ENCODE measurements at regions of chr20 and their contacts with region 1.

Region 1: GRCh38 chr20:8131598-8132483 is at the start of gene PLCB1:
- DNase-seq: peak; percentile 10
- H3K4me3 ChIP-seq: peak within 1 kb of the TSS; percentile 53 to 85 (median 68)
- H3K27ac ChIP-seq: peak within 1 kb of the TSS; percentile 74 to 92 (median 82)
- H3K4me1 ChIP-seq: peaks cover 0 to 38% (median 4%) of the 10 kb centered on the region in 3 donors
- H3K27me3 ChIP-seq: peaks cover 0 to 50% (median 0%) of the 10 kb centered on the region in 4 donors
- CTCF ChIP-seq: peak; percentile 66 to 82 (median 76)
- POLR2A ChIP-seq: no peak
- total RNA-seq, gene PLCB1: 1.9 to 20.4 (median 5.0) TPM

Region 2: GRCh38 chr20:8389381-8390036 is 257.7 kb after region 1 on chr20:
- intact Hi-C with region 1: loop called (anchors 10 kb)
- DNase-seq: no peak
- H3K4me3 ChIP-seq: no peak overlapping the region
- H3K27ac ChIP-seq: no peak overlapping the region
- H3K4me1 ChIP-seq: peaks cover 0 to 21% (median 7%) of the 10 kb centered on the region in 3 donors
- H3K27me3 ChIP-seq: no peaks in the 10 kb centered on the region
- CTCF ChIP-seq: peak; percentile 39 to 57 (median 51)
- POLR2A ChIP-seq: no peak

Region 3: GRCh38 chr20:8722276-8722928 is 590.6 kb after region 1 on chr20:
- intact Hi-C with region 1: loop called (anchors 10 kb)
- DNase-seq: no peak
- H3K4me3 ChIP-seq: no peak overlapping the region
- H3K27ac ChIP-seq: no peak overlapping the region
- H3K4me1 ChIP-seq: no peaks in the 10 kb centered on the region
- H3K27me3 ChIP-seq: no peaks in the 10 kb centered on the region
- CTCF ChIP-seq: peak; percentile 35 to 74 (median 70)
- POLR2A ChIP-seq: no peak